Activated CD4-positive, alpha-beta T cell treated with anti-CD3 and anti-CD28 coated beads, Interleukin-2, amount 10 ng/mL, durations not matched to agents 7 days and 5 days (primary cell): ENCODE measurements at regions of chr2 and their contacts with region 1.

Region 1: DNA sequence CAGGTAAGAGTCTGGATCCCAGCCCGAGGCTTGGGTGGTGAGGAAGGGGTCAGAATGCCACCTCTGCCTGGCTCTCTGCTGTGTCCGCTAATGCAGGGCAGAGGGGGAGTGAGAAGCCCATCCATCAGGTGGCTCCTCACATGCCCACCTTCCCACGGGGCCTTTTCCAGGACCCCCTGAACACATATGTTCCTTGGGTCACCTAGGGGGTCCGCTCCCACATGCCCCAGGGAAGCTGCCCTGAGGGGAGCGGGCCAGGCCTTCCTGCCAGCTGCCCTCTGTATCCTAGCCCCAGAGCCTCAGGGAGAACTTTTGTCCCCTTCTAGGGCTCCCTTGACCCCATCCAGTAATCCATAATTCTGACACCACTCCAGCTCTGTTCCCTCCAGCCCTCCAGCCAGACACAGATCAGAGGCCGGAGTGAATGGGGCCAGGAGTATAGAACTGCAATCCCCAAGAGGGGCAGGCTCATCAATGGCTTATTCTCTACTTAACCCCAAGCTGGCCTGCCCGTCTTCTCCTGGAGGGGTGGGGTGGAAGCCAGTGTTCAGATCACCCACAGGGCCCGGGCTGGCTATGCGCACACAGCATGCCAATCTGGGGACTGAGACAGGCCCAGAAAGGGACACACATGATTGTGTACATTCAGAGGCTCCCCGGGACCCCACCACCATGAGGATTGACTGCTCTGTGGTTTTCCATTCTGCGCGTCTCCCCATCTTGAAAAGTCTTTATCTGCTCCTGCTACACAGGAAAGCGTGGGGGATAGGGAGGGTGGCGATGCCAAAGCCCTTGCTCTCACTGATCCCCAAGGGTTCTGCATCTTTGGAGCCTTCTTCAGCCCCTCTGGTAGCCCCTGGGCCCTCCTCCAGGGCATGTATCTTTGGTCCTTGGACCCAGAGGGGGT is 1.1 kb downstream of the EMILIN1 start:
- DNase-seq: no peak
- H3K4me3 Mint-ChIP-seq: no peak overlapping the region
- H3K27ac Mint-ChIP-seq: no peak overlapping the region
- H3K4me1 Mint-ChIP-seq: peaks cover 55% of the 10 kb centered on the region
- H3K27me3 Mint-ChIP-seq: peaks cover 2% of the 10 kb centered on the region

Region 2: DNA sequence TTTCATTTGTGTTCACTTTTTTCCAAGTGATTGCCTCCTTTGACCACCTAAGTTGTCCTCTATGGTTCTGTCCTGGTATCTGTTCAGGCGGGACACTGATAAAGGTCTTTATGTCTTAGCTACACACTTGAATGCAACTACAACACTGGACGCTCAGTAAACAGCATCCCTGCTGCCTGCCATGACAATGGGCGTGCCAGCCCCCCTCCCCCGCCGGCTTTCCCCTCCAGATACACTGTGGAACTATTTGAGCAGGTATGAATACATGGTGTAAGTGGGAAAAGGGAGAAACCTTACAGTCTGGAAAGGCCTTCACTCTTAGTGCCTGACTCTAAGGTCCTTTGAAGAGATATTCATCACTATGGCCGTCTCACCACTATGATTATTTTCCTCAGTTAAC is 22.3 kb before region 1 on chr2:
- CTCF ChIA-PET with region 1: interaction called, 21 read pairs
- POLR2A ChIA-PET with region 1: no interaction called
- DNase-seq: no peak
- H3K4me3 Mint-ChIP-seq: no peak overlapping the region
- H3K27ac Mint-ChIP-seq: no peak overlapping the region
- H3K4me1 Mint-ChIP-seq: peaks cover 4% of the 10 kb centered on the region
- H3K27me3 Mint-ChIP-seq: no peaks in the 10 kb centered on the region

Region 3: DNA sequence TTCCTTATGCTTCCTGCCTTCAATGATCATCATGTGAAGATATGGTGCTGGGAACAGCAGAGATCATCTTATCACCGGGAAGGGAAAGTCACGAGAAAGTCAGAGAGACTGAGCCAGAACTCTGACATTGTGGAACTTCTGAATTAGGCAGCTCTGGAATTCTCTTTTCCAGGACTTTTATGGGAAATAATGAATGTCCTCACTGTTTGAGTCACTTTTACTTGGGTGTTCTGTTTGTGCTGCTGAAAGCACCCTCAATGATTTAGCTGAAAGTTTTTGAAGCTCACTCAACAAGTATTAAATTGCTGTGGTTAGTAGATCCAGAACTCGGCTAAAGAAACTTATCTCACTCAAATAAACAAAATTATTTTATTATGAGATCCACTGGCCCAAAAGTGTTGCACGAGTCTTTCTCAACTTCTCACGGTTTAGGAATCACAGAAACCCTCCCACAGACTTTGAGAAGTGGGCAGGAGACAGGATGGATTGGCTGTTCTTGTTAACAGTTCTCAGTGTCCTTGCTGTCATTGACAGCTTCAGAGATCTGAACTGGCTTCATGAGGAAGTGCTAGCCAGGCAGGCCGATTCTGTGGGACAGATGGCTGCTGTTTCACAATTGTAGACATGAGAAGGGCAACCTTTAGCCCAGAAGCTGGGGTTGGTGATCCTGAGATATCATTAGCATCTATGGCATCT is 106.0 kb after region 1 on chr2:
- CTCF ChIA-PET with region 1: no interaction called
- POLR2A ChIA-PET with region 1: no interaction called
- DNase-seq: no peak
- H3K4me3 Mint-ChIP-seq: no peak overlapping the region
- H3K27ac Mint-ChIP-seq: no peak overlapping the region
- H3K4me1 Mint-ChIP-seq: peaks cover 2% of the 10 kb centered on the region
- H3K27me3 Mint-ChIP-seq: peaks cover 26% of the 10 kb centered on the region